Lower lobe of right lung (tissue), 2 donors: ENCODE measurements at regions of chr15 and their contacts with region 1.

Region 1: GRCh38 chr15:31326156-31326732 is 391 bp upstream of the KLF13 start:
- DNase-seq: peak; percentile 99
- ATAC-seq: peak; percentile 90 to 94
- H3K4me3 ChIP-seq: peak overlapping the region; percentile 93
- H3K27ac ChIP-seq: peak overlapping the region; percentile 100
- H3K4me1 ChIP-seq: peaks cover 41% of the 10 kb centered on the region
- H3K27me3 ChIP-seq: no peaks in the 10 kb centered on the region
- CTCF ChIP-seq: no peak

Region 2: DNA sequence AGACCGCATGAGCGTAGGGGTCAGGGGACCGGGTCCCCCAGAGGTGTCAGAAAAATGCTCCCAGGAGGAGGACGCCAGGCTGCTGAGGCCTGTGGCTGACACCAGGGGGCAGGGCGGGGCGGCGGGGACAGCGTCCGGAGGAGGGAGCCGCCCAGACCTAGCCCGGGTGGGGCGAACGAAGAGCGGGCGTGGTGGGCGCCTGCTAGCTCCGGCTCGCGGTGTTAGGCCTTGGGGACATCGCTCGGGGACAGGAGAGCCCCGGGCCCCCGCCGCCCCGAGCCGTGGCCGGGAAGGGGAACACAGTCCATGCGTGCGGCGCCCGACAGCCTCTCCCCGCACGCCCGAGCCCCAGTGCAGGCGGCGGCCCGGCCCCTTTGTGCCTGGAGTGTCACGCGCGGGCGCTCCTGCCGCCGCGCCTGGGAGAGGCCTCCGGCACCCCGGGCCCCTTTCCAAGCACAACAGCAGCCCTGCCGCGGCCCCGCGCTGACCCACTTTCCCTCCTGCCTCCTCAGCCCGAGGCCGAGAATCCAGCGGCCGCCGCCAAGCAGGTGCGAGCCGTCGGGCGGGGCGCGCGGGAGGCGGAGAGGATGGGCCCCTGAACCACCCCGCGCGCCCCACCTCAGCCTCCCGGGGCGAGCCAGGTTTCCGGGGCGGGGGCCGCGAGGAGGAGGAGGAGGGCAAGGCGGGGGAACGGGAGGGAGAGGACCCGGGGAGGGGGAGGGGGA is 110.6 kb before region 1 on chr15:
- intact Hi-C with region 1: loop called (anchors 10 kb)
- DNase-seq: peak; percentile 93
- ATAC-seq: peak; percentile 91 to 92
- H3K4me3 ChIP-seq: peak overlapping the region; percentile 68
- H3K27ac ChIP-seq: peak overlapping the region; percentile 99
- H3K4me1 ChIP-seq: peaks cover 43% of the 10 kb centered on the region
- H3K27me3 ChIP-seq: no peaks in the 10 kb centered on the region
- CTCF ChIP-seq: peak; percentile 90